Adrenal gland (tissue), 19 donors: ENCODE measurements at regions of chr10 and their contacts with region 1.

Region 1: DNA sequence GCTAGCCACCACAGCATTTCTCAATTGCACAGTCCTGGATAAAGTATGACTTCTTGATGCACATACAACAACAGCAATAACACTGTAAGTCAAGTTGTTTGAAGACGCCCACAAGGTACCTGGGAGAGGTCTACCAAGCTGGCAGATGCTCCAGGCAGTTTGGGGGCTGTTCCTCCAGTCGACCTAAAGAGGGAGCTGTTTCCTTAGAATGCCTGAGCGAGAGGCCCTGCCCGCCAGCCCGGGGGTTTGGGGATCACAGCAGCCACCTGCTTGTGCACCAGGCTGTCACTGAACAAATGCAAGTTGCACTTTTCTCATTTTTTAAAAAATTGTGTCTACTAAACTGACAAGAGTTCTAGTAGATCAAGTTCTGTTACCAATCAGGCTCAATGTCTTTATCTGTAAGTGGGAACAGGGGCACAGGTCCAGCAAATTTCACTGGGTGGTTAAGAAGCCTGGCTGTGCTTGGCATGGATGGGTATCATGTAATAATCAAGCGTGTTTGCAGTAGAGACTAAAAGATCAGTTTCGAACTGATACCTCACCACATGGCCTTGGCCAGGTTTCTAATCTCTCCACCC is 193.8 kb upstream of the ADO start:
- DNase-seq: peak in 6 of 7 donors; percentile 35 to 70 (median 50)
- H3K4me3 ChIP-seq: no peak overlapping the region
- H3K27ac ChIP-seq: no peak overlapping the region
- H3K4me1 ChIP-seq: no peaks in the 10 kb centered on the region
- H3K27me3 ChIP-seq: no peaks in the 10 kb centered on the region
- CTCF ChIP-seq: peak; percentile 43 to 77 (median 64)
- POLR2A ChIP-seq: no peak

Region 2: GRCh38 chr10:62502995-62503613 is 107.6 kb before region 1 on chr10:
- intact Hi-C with region 1: no loop called
- DNase-seq: peak in 1 of 7 donors; percentile 8
- H3K4me3 ChIP-seq: no peak overlapping the region
- H3K27ac ChIP-seq: no peak overlapping the region
- H3K4me1 ChIP-seq: no peaks in the 10 kb centered on the region
- H3K27me3 ChIP-seq: no peaks in the 10 kb centered on the region
- CTCF ChIP-seq: no peak
- POLR2A ChIP-seq: no peak

Region 3: GRCh38 chr10:62816331-62817120 is 205.8 kb after region 1 on chr10 and contains the start of gene EGR2:
- intact Hi-C with region 1: loop called in 1 of 2 experiments (anchors 5 kb)
- DNase-seq: peak; percentile 92 to 97 (median 94)
- H3K4me3 ChIP-seq: peak within 1 kb of the TSS in 3 of 4 donors; percentile 23 to 76 (median 59)
- H3K27ac ChIP-seq: peak within 1 kb of the TSS; percentile 34 to 94 (median 81)
- H3K4me1 ChIP-seq: peaks cover 31 to 32% of the 10 kb centered on the region in 2 donors
- H3K27me3 ChIP-seq: peaks cover 28% of the 10 kb centered on the region
- CTCF ChIP-seq: no peak
- POLR2A ChIP-seq: peak in 1 of 2 donors; percentile 42
- total RNA-seq, gene EGR2: 0.17 to 6.8 (median 0.69) TPM